ENCODE measurements at regions of chr6 and their contacts with region 1.

Region 1: DNA sequence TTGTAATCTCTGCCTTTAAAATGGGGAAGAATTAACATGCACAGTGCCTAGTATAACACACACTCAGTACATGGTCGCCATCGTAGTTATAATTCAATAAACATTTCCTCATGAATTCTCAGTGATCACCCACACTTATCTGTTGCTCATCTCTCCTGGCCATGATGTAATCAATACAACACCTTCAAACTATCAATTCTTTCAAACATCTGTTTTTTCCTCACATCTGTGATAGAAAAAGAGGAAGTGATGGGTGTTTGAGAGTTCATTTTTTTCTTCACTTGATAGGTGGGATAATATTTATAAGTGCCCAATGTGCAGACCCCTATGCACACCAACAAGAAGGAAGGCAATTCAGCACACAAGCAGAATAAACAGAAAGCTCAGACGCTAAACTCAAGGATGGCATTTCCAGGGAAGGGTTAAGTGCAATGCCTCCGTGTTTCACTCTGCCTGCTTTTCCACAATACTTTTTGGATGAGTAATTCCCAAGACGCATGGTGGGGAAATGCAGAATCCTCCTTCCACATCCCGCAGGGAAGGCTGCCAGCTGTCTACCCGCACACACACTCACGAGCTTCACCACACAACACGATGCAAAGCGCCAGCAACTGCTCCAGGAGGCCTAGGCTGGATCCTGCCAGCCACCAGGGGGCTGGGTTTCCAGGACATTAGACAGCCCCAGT is 100.3 kb downstream of the GMPR start:
- DNase-seq: no peak

Region 2: GRCh38 chr6:16505711-16506357 is 167.1 kb after region 1 on chr6:
- intact Hi-C with region 1: loop called (anchors 5 kb)
- DNase-seq: no peak

Measured in cardiac septum (tissue), 1 donor.